Right ventricle myocardium inferior (tissue), 1 donor: ENCODE measurements at regions of chr20 and their contacts with region 1.

Region 1: DNA sequence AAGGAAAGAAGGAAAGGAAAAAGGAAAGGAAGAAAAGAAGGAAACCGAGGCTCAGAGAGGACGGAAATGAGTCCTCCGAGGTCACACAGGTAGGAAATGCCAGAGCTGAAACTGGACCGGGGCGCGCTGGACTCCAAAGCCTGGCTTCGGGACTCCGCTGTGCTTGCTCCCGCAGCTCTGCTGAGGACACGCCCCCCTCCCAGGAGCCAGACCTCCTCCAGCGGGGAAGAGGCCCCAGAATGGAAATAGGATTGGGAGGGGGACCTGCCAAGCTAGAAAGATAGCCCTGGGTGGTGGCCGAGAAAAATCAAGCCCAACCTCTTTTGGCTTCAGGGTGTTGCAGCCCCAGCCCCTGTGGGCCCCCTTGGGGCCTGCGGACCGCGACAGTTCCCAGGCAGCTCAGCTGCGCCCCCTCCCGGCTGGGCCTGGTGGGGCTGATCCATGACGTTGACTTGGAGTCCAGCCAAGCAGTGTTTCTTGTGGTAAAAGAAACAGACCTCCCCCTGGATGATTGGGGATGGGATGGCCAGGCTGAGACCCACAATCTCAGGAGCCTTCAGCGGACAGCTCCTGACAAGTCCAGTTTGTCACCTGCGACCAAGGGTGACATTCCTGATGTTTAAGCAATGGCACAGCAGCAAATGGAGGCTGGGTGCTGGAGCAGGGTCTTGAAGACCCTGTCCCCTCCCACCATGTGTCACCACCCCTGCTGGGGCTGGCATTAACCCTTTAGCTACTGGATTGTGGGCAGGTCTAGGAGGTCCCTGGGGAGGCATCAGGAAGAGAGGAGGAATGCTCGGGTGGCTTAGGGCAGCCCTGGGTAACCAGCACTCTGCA is 55.5 kb downstream of the RIPOR3 start:
- DNase-seq: peak; percentile 76
- ATAC-seq: peak; percentile 73

Region 2: GRCh38 chr20:50690634-50691572 is 55.0 kb after region 1 on chr20 and contains the start of gene RIPOR3:
- intact Hi-C with region 1: loop called (anchors 10 kb)
- DNase-seq: peak; percentile 74
- ATAC-seq: peak; percentile 38
- total RNA-seq, gene RIPOR3: 8.3 TPM